Right cardiac atrium (tissue), 5 donors: ENCODE measurements at regions of chr2 and their contacts with region 1.

Region 1: GRCh38 chr2:101831351-101831865 is 133.9 kb downstream of the MAP4K4 start:
- DNase-seq: peak; percentile 69 to 86 (median 80)
- ATAC-seq: peak; percentile 86 to 89
- H3K4me3 ChIP-seq: no peak overlapping the region
- H3K27ac ChIP-seq: peak overlapping the region; percentile 2
- H3K4me1 ChIP-seq: peaks cover 14% of the 10 kb centered on the region
- H3K27me3 ChIP-seq: no peaks in the 10 kb centered on the region

Region 2: GRCh38 chr2:101341901-101342624 is 489.3 kb before region 1 on chr2:
- intact Hi-C with region 1: loop called in 1 of 4 experiments (anchors 10 kb)
- DNase-seq: peak; percentile 75 to 89 (median 87)
- ATAC-seq: peak; percentile 62 to 74
- H3K4me3 ChIP-seq: no peak overlapping the region
- H3K27ac ChIP-seq: no peak overlapping the region
- H3K4me1 ChIP-seq: no peaks in the 10 kb centered on the region
- H3K27me3 ChIP-seq: no peaks in the 10 kb centered on the region

Region 3: GRCh38 chr2:101419096-101419663 is 412.2 kb before region 1 on chr2:
- intact Hi-C with region 1: loop called in 3 of 4 experiments (anchors 2 to 10 kb)
- DNase-seq: peak in 2 of 3 donors; percentile 35 to 58
- ATAC-seq: peak; percentile 70 to 83
- H3K4me3 ChIP-seq: no peak overlapping the region
- H3K27ac ChIP-seq: no peak overlapping the region
- H3K4me1 ChIP-seq: no peaks in the 10 kb centered on the region
- H3K27me3 ChIP-seq: no peaks in the 10 kb centered on the region

Region 4: GRCh38 chr2:101518578-101519492 is 312.6 kb before region 1 on chr2:
- intact Hi-C with region 1: loop called (anchors 5 kb)
- DNase-seq: peak in 2 of 3 donors; percentile 69 to 72
- ATAC-seq: peak; percentile 69 to 77
- H3K4me3 ChIP-seq: no peak overlapping the region
- H3K27ac ChIP-seq: no peak overlapping the region
- H3K4me1 ChIP-seq: no peaks in the 10 kb centered on the region
- H3K27me3 ChIP-seq: no peaks in the 10 kb centered on the region

Region 5: GRCh38 chr2:101697124-101698013 is 134.0 kb before region 1 on chr2 and contains the start of gene MAP4K4:
- intact Hi-C with region 1: loop called (anchors 5 to 10 kb)
- DNase-seq: peak; percentile 89 to 95 (median 94)
- ATAC-seq: peak; percentile 92 to 93
- H3K4me3 ChIP-seq: peak within 1 kb of the TSS; percentile 98
- H3K27ac ChIP-seq: peak within 1 kb of the TSS; percentile 87
- H3K4me1 ChIP-seq: peaks cover 2% of the 10 kb centered on the region
- H3K27me3 ChIP-seq: no peaks in the 10 kb centered on the region
- total RNA-seq, gene MAP4K4: 56.4 to 64.5 (median 61.8) TPM